Caki2 (cell line): ENCODE measurements at regions of chr4 and their contacts with region 1.

Region 1: GRCh38 chr4:170027181-170027829 is 1.1 kb upstream of the MFAP3L start:
- DNase-seq: peak; percentile 94

Region 2: DNA sequence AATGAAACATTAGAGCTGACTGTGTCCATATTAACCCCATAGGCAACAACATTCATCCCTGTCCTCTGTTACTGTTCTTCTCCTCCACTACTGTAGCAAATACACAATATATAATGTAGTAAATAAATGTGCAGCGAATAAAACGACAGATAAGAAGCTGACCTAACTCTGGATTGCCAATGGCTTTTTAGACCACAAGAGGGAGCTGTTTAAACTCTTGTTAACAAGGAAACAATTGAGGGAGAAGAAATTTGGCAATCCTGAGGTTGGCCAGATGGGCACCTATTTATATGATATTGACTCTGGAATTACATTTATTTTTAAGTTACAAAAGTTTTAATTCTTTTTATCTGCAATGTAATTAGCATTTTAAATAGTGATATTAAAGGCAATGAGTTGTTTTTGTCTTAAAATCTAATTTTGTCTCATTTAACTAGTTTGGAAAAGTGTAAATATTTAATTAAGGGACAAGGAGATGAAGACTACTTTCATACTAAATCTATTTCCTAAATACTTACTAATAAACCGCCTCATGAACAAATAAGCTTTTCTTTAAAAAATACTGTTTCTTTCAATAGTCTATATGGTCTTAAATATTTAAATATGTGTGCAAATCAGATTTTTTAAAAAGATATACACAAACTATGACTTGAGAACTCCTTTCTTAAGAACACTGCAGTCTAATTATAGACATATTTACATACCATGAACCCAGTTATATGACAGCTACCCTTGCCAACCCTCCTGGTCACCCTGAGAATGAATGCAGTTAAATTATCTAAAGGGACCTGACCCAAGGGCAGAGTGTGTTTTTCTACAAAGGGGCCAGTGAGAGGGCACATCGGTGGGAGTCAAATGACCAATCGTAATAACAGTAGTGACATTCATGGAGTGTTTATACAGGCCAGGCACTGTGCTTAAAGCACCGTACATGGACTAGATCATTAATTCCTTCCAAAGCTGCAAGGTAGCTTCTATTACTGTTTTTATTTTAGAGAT is 216.7 kb before region 1 on chr4:
- in situ Hi-C with region 1: loop called (anchors 25 kb)
- DNase-seq: peak; percentile 37

Region 3: GRCh38 chr4:169945636-169946035 is 81.7 kb before region 1 on chr4:
- in situ Hi-C with region 1: no loop called
- DNase-seq: no peak